PC-9 (cell line): ENCODE measurements at regions of chr6 and their contacts with region 1.

Region 1: GRCh38 chr6:30194797-30195690 is 18.2 kb downstream of the TRIM26 start:
- DNase-seq: no peak
- H3K4me3 ChIP-seq: no peak overlapping the region
- H3K27ac ChIP-seq: no peak overlapping the region
- H3K4me1 ChIP-seq: no peaks in the 10 kb centered on the region
- H3K27me3 ChIP-seq: no peaks in the 10 kb centered on the region
- CTCF ChIP-seq: no peak

Region 2: GRCh38 chr6:29826271-29826670 is 368.8 kb before region 1 on chr6:
- CTCF ChIA-PET with region 1: no interaction called
- POLR2A ChIA-PET with region 1: interaction called, 10 read pairs
- intact Hi-C with region 1: no loop called
- DNase-seq: no peak
- H3K4me3 ChIP-seq: no peak overlapping the region
- H3K27ac ChIP-seq: no peak overlapping the region
- H3K4me1 ChIP-seq: no peaks in the 10 kb centered on the region
- H3K27me3 ChIP-seq: peaks cover 11% of the 10 kb centered on the region; the same call in 1 of the 2 replicates
- CTCF ChIP-seq: no peak

Region 3: DNA sequence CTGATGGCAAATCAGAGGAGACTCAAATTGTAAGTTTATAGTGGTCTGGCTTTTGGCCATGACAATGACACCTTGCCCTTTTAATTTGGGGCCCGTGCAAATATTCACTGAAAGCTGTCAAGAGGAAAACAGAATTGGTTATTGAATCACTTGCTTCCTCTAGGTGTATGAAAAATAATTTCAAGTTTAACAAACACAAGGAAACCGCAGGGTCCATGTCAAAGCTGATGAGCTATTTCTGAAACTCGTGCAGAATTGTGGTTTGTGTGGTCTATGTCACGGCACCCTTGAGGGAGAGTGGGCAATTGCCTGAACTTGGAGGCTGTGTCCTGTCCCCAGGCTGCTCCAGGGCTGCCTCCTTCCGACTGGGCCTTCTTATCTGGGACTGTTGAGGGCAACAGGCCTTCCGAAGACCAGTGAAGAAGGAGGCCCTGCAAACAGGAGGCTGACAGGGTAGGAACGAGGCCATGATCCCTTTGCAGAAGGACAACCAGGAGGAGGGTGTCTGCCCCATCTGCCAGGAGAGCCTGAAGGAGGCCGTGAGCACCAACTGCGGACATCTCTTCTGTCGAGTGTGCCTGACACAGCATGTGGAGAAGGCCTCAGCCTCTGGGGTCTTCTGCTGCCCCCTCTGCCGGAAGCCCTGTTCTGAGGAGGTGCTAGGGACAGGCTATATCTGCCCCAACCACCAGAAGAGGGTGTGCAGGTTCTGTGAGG is 58.3 kb before region 1 on chr6:
- CTCF ChIA-PET with region 1: no interaction called
- POLR2A ChIA-PET with region 1: no interaction called
- intact Hi-C with region 1: no loop called
- DNase-seq: no peak
- H3K4me3 ChIP-seq: no peak overlapping the region
- H3K27ac ChIP-seq: no peak overlapping the region
- H3K4me1 ChIP-seq: no peaks in the 10 kb centered on the region
- H3K27me3 ChIP-seq: no peaks in the 10 kb centered on the region
- CTCF ChIP-seq: no peak